ENCODE measurements at regions of chr6 and their contacts with region 1.

Region 1: GRCh38 chr6:56314683-56315523 is 67.5 kb upstream of the COL21A1 start:
- DNase-seq: peak; percentile 65
- H3K4me3 Mint-ChIP-seq: no peak overlapping the region
- H3K27ac Mint-ChIP-seq: no peak overlapping the region
- H3K4me1 Mint-ChIP-seq: no peaks in the 10 kb centered on the region
- H3K27me3 Mint-ChIP-seq: no peaks in the 10 kb centered on the region
- CTCF ChIP-seq: peak; percentile 87

Region 2: DNA sequence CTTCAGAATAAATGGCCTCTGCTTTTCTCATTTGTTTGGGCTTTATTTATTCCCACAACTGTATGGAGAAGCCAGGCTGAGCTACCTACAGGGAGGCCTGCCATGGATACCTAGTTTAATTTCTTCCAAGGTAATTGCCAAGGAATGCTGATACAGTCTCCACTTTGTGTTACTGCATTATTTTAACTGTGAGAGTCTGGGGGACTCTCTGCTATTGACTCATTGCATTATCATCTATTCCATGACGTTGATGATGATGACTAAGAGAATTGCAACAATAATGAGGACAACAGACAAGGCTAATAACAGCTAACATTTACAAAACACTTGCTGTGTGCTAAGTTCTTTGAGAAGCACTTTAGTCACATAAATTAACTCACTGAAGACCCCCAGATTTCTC is 20.8 kb after region 1 on chr6:
- CTCF ChIA-PET with region 1: interaction called, 12 read pairs
- POLR2A ChIA-PET with region 1: interaction called, 3 read pairs
- intact Hi-C with region 1: no loop called
- DNase-seq: peak; percentile 88
- H3K4me3 Mint-ChIP-seq: no peak overlapping the region
- H3K27ac Mint-ChIP-seq: peak overlapping the region; percentile 89
- H3K4me1 Mint-ChIP-seq: peaks cover 13% of the 10 kb centered on the region
- H3K27me3 Mint-ChIP-seq: no peaks in the 10 kb centered on the region
- CTCF ChIP-seq: no peak

Region 3: DNA sequence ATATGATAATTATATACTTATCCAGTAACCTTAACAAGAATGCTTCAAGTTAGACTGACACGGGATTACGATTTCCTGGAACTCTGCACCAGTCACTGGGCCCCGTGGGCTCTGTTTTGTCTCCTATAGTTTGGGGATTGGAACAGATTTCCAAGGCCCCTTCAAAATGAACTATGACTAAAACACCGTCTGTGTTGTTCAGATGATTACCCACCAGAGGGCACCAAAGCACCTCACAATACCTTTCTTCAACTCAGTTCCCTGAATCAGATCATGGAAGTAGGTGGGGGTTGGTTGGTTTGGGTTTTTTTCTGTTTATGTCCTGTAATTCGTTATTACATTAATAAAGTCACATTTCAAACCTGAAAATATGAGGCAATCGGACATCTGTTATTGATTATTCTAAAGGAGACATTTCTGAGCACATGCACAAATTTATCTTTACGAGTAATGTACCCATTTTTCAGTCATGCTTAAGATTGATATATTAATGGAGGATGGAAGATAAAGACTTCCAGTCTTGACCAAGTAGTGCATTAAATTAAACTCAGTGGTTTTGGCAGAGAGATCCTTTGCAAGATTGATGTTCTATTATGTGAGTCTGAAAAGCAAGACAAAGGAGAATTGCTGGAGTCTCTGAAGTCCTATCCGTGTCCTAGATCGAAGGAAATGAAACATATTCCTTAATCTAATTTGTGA is 44.4 kb after region 1 on chr6:
- CTCF ChIA-PET with region 1: interaction called, 3 read pairs
- POLR2A ChIA-PET with region 1: no interaction called
- intact Hi-C with region 1: loop called (anchors 1 kb)
- DNase-seq: peak; percentile 76
- H3K4me3 Mint-ChIP-seq: no peak overlapping the region
- H3K27ac Mint-ChIP-seq: no peak overlapping the region
- H3K4me1 Mint-ChIP-seq: peaks cover 4% of the 10 kb centered on the region
- H3K27me3 Mint-ChIP-seq: no peaks in the 10 kb centered on the region
- CTCF ChIP-seq: peak; percentile 81

Region 4: DNA sequence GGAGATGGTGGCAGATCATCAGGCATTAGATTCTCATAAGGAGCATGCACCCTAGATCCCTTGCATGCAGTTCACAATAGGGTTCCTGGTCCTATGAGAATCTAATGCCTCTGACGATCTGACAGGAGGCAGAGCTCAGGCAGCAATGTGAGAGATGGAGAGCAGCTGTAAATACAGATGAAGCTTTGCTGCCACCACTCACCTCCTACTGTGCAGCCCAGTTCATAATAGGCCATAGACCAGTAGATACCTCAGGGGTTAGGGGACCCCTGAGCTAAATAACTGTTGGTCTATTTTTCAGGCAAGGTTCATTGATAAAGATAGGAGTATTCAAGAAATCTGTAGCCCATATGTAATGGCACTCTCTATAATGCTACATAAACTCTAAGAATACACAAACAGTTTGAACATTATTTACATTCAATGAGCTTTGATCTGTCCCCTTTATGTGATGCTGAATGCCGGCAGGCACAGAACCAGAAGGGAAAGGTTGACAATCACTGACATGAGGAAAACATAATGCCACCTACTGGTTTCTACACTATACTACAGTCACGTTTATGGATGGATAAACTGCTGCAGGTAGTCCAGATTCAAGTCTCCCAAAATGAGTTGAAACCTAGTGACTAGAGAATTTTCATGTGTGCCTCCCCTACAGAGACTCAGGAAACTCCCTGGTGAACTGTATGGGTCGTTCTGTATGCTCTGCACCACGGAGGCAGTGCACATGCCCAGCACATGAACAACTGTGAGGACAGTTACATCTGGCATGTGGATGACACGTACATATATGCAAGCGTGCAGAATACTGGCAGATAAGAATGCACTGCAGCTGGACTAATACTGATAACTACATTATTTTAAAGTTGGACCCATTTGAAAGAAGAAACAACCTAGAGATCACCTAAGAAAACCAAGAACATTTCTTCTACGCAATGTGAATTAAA is 255.8 kb after region 1 on chr6:
- CTCF ChIA-PET with region 1: interaction called, 3 read pairs
- POLR2A ChIA-PET with region 1: no interaction called
- intact Hi-C with region 1: loop called (anchors 2 kb)
- DNase-seq: peak; percentile 46
- H3K4me3 Mint-ChIP-seq: no peak overlapping the region
- H3K27ac Mint-ChIP-seq: no peak overlapping the region
- H3K4me1 Mint-ChIP-seq: no peaks in the 10 kb centered on the region
- H3K27me3 Mint-ChIP-seq: no peaks in the 10 kb centered on the region
- CTCF ChIP-seq: peak; percentile 68

Region 5: DNA sequence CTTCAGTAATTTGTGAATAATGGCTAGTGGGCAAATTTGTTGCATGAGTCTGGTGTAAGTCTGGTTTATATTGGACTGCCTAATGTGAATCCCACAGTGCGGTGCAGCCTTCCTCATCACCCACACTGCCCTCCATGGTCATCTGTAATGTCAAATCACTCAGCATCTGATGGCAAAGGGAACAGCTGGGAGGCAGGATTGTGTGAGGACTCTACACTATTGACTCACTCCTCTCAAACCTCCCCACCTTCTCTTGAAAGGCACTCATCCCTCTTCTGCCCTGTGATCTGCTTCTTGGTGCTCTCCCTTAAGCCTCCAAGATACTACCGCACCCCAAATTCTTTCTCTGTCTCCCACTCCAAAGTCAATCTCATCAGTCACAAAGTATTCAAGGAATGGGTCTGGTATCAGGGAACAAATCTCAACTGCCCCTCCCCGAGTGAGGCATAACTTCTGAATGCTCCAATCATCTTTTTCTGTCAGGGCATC is 494.0 kb after region 1 on chr6:
- CTCF ChIA-PET with region 1: no interaction called
- POLR2A ChIA-PET with region 1: no interaction called
- intact Hi-C with region 1: no loop called
- DNase-seq: peak; percentile 33
- H3K4me3 Mint-ChIP-seq: no peak overlapping the region
- H3K27ac Mint-ChIP-seq: peak overlapping the region; percentile 44
- H3K4me1 Mint-ChIP-seq: peaks cover 18% of the 10 kb centered on the region
- H3K27me3 Mint-ChIP-seq: no peaks in the 10 kb centered on the region
- CTCF ChIP-seq: no peak

Measured in MCF 10A (cell line).